GM13977 (cell line): ENCODE measurements at regions of chr4 and their contacts with region 1.

Region 1: DNA sequence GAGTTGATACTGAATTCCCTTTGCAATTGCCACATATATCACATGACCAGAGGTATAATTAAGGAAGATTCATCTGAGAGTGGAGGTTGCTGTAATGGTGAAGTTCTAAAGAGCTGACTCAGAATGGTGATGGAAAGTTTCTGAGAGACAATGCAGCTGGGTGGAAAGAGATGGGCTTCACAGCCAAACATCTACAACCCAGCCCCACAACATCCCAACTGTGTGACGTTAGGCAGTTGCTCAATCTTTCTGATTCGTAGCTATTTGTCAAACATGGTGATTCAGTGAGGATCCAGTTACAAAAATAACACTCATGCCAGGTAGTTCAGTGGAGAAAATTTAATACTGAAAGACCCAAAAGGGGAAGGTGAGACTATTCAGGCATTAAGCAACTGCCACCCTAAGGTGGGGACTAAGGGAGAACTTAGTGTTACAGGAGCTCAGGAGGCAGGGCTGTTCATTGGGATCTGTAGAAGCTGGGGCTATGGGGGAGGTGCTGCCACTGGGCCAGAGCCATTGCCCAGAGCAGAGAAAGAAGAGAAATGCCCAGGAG is 6.9 kb upstream of the AFF1 start:
- DNase-seq: no peak
- CTCF ChIP-seq: no peak

Region 2: GRCh38 chr4:87093443-87094123 is 165.7 kb after region 1 on chr4:
- in situ Hi-C with region 1: loop called (anchors 10 kb)
- DNase-seq: peak; percentile 69
- CTCF ChIP-seq: peak; percentile 67